ENCODE measurements at regions of chr2 and their contacts with region 1.

Region 1: GRCh38 chr2:174326161-174327020 is 8.4 kb upstream of the SP9 start:
- DNase-seq: peak in 24 of 42 donors; percentile 12 to 64 (median 32)

Region 2: GRCh38 chr2:173963817-173964564 is 362.4 kb before region 1 on chr2:
- intact Hi-C with region 1: loop called (anchors 5 kb)
- DNase-seq: peak; percentile 69 to 96 (median 92)

Region 3: DNA sequence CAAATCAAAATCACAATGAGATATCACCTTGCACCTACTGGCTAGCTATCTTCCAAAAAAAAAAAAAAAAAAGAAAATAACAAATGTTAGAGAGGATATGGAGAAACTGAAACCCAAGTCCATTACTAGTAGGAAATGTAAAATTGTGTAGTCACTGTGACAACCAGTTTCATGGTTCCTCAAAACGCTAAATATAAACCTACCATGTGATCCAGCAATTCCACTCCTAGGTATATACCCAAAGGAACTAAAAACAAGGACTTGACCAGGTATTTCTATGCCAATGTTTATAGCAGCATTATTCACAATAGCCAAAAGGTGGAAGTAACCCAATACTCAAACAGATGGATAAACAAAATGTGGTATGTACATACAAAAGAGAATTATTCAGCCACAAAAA is 57.4 kb after region 1 on chr2:
- intact Hi-C with region 1: no loop called
- DNase-seq: no peak

Measured in head of caudate nucleus (tissue), 42 donors.